CD8-positive, alpha-beta T cell (primary cell): ENCODE measurements at regions of chr19 and their contacts with region 1.

Region 1: GRCh38 chr19:2950286-2951124 is 5.7 kb upstream of the ZNF77 start:
- DNase-seq: peak; percentile 100
- ATAC-seq: peak; percentile 93
- H3K4me3 ChIP-seq: peak overlapping the region; percentile 77 to 80
- H3K4me3 Mint-ChIP-seq: peak overlapping the region; percentile 97
- H3K27ac ChIP-seq: peak overlapping the region; percentile 78 to 97
- H3K27ac Mint-ChIP-seq: peak overlapping the region; percentile 98
- H3K4me1 ChIP-seq: peaks cover 12% of the 10 kb centered on the region
- H3K4me1 Mint-ChIP-seq: peaks cover 32% of the 10 kb centered on the region
- H3K27me3 ChIP-seq: no peaks in the 10 kb centered on the region
- H3K27me3 Mint-ChIP-seq: no peaks in the 10 kb centered on the region
- CTCF ChIP-seq: no peak

Region 2: GRCh38 chr19:2867025-2867991 is 83.2 kb before region 1 on chr19 and contains the start of gene ZNF556:
- CTCF ChIA-PET with region 1: no interaction called
- POLR2A ChIA-PET with region 1: no interaction called
- intact Hi-C with region 1: no loop called
- DNase-seq: peak in 1 of 9 experiments; percentile 13
- ATAC-seq: no peak
- H3K4me3 ChIP-seq: no peak within 1 kb of the TSS
- H3K4me3 Mint-ChIP-seq: no peak within 1 kb of the TSS
- H3K27ac ChIP-seq: no peak within 1 kb of the TSS
- H3K27ac Mint-ChIP-seq: no peak within 1 kb of the TSS
- H3K4me1 ChIP-seq: no peaks in the 10 kb centered on the region
- H3K4me1 Mint-ChIP-seq: peaks cover 8% of the 10 kb centered on the region
- H3K27me3 ChIP-seq: peaks cover 0 to 2% of the 10 kb centered on the region in 2 experiments
- H3K27me3 Mint-ChIP-seq: peaks cover 10% of the 10 kb centered on the region
- CTCF ChIP-seq: no peak
- total RNA-seq, gene ZNF556: not detected

Region 3: DNA sequence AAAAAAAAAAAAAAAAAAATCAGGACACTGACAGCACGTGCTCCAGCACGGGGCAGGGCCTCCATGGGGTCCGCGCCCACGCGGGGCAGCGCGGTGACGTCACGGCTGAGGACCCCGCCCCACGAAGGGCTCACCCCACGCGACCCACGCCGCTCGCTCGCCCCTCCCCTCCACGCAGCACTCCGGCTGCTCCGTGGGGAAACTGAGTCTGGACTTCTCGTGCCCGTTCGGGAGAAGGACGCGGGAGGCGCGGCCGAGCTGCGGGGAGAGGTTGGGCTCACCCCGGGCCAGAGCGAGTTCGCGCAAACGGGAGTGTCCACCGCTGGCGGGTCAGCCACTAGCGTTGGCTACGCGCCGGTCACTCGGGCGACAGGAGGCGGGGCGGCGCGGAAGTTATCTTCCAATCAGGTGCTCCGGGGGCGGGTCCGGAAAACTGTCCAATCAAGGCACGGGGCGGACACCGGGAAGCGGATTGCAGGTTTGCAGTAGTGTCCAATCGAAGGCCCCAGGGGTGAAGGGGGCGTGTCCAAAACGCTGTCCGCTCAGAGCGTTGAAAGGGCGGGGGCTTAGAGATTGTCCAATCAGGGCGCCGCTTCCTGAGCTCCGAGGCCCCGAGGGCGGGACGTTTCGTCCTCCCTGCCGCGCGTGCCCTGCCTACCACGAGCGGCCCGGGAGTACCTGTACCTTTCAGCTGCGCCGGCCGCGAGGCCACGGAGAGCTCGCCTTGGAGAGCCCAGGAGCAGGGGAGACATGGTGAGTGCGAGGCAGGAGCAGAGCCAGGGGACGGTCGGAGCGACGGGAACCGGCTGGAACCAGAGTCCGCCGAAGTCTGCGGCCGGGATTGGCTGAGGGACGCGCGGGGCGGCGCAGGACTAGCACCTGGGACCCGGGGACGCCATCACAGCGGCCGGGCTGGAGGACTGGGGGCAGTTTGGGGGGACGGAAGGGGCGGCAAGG is 49.9 kb before region 1 on chr19 and contains the start of gene ZNF57:
- CTCF ChIA-PET with region 1: interaction called, 3 read pairs
- POLR2A ChIA-PET with region 1: interaction called, 7 read pairs
- intact Hi-C with region 1: loop called (anchors 1 to 2 kb)
- DNase-seq: peak; percentile 92 to 99 (median 98)
- ATAC-seq: peak; percentile 96
- H3K4me3 ChIP-seq: peak within 1 kb of the TSS; percentile 85 to 90
- H3K4me3 Mint-ChIP-seq: peak within 1 kb of the TSS; percentile 97
- H3K27ac ChIP-seq: peak within 1 kb of the TSS; percentile 37 to 50
- H3K27ac Mint-ChIP-seq: peak within 1 kb of the TSS; percentile 86
- H3K4me1 ChIP-seq: peaks cover 10% of the 10 kb centered on the region
- H3K4me1 Mint-ChIP-seq: peaks cover 27% of the 10 kb centered on the region
- H3K27me3 ChIP-seq: no peaks in the 10 kb centered on the region
- H3K27me3 Mint-ChIP-seq: no peaks in the 10 kb centered on the region
- CTCF ChIP-seq: no peak
- total RNA-seq, gene ZNF57: 0.72 to 1.5 TPM

Region 4: GRCh38 chr19:2977001-2977685 is 26.6 kb after region 1 on chr19 and contains the start of gene TLE6:
- CTCF ChIA-PET with region 1: interaction called, 4 read pairs
- POLR2A ChIA-PET with region 1: interaction called, 3 read pairs
- intact Hi-C with region 1: loop called (anchors 1 kb)
- DNase-seq: peak; percentile 87 to 96 (median 93)
- ATAC-seq: peak; percentile 99
- H3K4me3 ChIP-seq: peak within 1 kb of the TSS; percentile 67 to 84
- H3K4me3 Mint-ChIP-seq: peak within 1 kb of the TSS; percentile 93
- H3K27ac ChIP-seq: no peak within 1 kb of the TSS
- H3K27ac Mint-ChIP-seq: peak within 1 kb of the TSS; percentile 52
- H3K4me1 ChIP-seq: peaks cover 12% of the 10 kb centered on the region
- H3K4me1 Mint-ChIP-seq: peaks cover 16% of the 10 kb centered on the region
- H3K27me3 ChIP-seq: no peaks in the 10 kb centered on the region
- H3K27me3 Mint-ChIP-seq: peaks cover 6% of the 10 kb centered on the region
- CTCF ChIP-seq: no peak
- total RNA-seq, gene TLE6: not detected

Region 5: DNA sequence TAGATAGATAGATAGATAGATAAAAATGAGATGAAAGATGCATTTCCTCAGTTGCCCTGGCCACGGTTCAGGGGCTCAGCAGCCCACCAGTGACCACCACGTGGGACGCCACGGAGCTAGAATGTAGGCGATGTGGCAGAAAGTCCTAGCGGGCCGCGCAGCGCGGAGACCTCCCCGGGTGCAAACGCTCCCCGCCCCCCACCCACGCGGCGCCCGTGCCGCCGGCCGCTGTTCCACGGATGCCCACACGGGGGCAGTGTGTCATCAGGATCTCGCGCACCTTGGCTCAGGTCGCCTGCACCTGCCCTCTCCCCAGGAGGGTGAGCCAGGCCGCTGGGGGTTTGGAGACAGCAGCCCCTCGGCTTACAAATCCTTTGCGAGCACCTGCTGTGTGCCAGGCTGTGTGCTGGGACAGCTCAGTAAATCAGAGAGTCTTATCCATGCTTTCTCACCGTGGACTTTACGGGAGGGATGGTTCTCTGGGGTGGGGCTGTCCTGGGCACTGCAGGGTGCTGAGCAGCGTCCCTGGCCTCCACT is 125.5 kb after region 1 on chr19:
- CTCF ChIA-PET with region 1: interaction called, 22 read pairs
- POLR2A ChIA-PET with region 1: interaction called, 3 read pairs
- intact Hi-C with region 1: no loop called
- DNase-seq: peak; percentile 58 to 89 (median 79)
- ATAC-seq: peak; percentile 100
- H3K4me3 ChIP-seq: no peak overlapping the region
- H3K4me3 Mint-ChIP-seq: no peak overlapping the region
- H3K27ac ChIP-seq: no peak overlapping the region
- H3K27ac Mint-ChIP-seq: no peak overlapping the region
- H3K4me1 ChIP-seq: peaks cover 10% of the 10 kb centered on the region
- H3K4me1 Mint-ChIP-seq: peaks cover 2% of the 10 kb centered on the region
- H3K27me3 ChIP-seq: no peaks in the 10 kb centered on the region
- H3K27me3 Mint-ChIP-seq: no peaks in the 10 kb centered on the region
- CTCF ChIP-seq: peak; percentile 85